Heart left ventricle (tissue), 16 donors: ENCODE measurements at regions of chr22 and their contacts with region 1.

Region 1: GRCh38 chr22:24005201-24005600 is at the start of gene GSTT4:
- DNase-seq: peak; percentile 72 to 96 (median 87)
- ATAC-seq: peak; percentile 92 to 98 (median 96)
- H3K4me3 ChIP-seq: no peak within 1 kb of the TSS
- H3K27ac ChIP-seq: peak within 1 kb of the TSS in 10 of 12 donors; percentile 13 to 74 (median 57)
- H3K4me1 ChIP-seq: peaks cover 0 to 17% (median 7%) of the 10 kb centered on the region in 12 donors
- H3K27me3 ChIP-seq: no peaks in the 10 kb centered on the region
- CTCF ChIP-seq: no peak
- POLR2A ChIP-seq: no peak
- total RNA-seq, gene GSTT4: not detected

Region 2: DNA sequence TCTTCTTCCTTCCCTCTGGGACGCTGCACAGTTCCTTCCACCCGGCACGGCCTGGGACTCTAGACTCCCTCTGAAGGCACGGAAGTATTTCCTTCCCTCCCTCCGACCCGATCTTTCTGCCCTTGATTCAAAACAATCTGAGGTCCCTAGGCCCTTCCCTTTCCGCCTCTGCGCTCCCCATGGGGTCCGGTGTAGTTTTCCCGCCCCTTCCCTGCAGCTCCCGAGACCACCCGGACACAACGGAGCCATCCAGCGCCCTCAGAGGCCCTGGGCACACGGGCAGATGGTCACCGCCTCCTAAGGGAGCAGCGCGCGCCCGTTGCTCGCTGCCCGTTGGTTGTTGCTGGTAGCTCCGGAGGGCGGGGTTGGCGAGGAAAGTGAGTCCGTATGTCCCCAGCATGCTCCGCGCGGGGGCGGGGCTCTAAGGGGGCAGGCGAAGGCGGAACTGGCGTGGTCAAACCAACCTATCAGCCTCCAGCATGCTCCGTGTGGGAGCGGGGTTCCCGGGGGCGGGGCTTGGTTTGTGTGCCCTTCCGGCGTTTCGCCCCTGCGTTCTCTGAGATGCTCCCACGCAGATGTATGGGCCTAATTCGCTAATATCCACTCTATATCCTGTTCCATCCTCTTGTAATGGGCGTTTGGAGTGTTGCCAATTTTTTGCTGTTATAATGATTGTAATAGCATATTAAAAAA is 91.4 kb before region 1 on chr22:
- intact Hi-C with region 1: no loop called
- DNase-seq: peak; percentile 99 to 100 (median 100)
- ATAC-seq: peak; percentile 98 to 100 (median 100)
- H3K4me3 ChIP-seq: peak overlapping the region; percentile 24 to 73 (median 64)
- H3K27ac ChIP-seq: peak overlapping the region; percentile 42 to 94 (median 87)
- H3K4me1 ChIP-seq: peaks cover 0 to 21% (median 18%) of the 10 kb centered on the region in 12 donors
- H3K27me3 ChIP-seq: no peaks in the 10 kb centered on the region
- CTCF ChIP-seq: no peak
- POLR2A ChIP-seq: peak in 1 of 2 donors; percentile 91

Region 3: DNA sequence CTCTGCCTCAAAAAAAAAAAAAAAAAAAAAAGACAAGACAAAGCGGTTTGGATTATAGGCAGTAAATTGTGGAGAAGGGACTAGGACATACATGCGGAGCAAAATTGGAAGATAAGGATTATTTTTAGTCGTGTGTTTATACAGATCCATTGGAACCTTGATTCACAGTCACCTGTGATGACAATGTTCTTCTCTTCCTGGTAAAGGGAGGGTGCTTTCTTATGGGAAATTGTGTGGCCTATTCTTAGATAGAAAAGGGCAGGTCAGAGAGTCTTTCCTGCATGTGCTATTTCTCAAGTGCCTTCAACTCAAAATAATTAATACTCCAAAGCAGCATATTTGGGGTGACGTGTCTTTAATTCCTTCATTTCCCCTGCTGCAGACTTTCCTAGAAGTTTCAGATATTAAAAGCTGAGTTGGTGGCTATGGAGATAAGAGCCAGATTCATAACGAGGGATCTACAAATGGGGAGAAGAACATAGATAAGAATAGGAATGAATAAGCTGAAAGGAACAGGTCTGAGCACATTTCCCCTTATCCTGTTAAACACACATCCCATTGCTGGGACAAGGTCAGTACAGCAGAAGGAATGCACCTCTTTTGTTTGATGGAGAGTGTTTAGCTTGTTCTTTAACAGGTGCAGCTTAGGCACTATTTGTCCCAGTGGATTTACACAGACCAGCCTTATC is 66.7 kb before region 1 on chr22:
- intact Hi-C with region 1: loop called in 5 of 10 experiments (anchors 2 to 10 kb)
- DNase-seq: no peak
- ATAC-seq: peak in 1 of 4 donors; percentile 75
- H3K4me3 ChIP-seq: no peak overlapping the region
- H3K27ac ChIP-seq: peak overlapping the region in 1 of 12 donors; percentile 26
- H3K4me1 ChIP-seq: peaks cover 0 to 6% (median 0%) of the 10 kb centered on the region in 12 donors
- H3K27me3 ChIP-seq: no peaks in the 10 kb centered on the region
- CTCF ChIP-seq: no peak
- POLR2A ChIP-seq: no peak

Region 4: DNA sequence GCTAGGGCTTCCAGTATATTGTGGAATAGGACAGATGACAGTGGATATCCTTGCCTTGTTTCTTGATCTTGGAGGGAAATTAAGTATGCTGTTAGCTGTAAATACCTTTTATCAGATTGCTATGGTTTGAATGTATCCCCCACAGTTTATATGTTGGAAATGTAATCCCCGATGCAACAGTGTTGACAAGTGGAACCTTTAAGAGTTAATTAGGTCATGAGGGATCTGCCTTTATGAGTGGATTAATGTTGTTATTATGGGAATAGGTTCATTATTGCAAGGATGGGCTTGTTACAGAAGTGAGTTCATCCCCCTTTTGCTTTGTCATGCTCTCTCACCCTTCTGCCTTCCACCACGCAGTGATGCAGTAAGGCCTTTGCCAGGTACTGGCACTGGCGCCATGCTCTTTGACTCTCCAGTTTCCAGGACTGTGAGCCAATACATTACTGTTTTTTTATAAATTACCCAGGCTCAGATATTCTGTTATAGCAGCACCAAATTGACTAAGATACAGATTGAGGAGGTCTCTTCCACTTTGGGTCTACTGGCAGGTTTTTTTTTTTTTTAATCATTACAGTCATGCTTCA is 22.3 kb after region 1 on chr22:
- intact Hi-C with region 1: no loop called
- DNase-seq: peak in 1 of 5 donors; percentile 41
- ATAC-seq: peak; percentile 41 to 71 (median 60)
- H3K4me3 ChIP-seq: no peak overlapping the region
- H3K27ac ChIP-seq: no peak overlapping the region
- H3K4me1 ChIP-seq: peaks cover 0 to 18% (median 0%) of the 10 kb centered on the region in 12 donors
- H3K27me3 ChIP-seq: no peaks in the 10 kb centered on the region
- CTCF ChIP-seq: no peak
- POLR2A ChIP-seq: no peak

Region 5: DNA sequence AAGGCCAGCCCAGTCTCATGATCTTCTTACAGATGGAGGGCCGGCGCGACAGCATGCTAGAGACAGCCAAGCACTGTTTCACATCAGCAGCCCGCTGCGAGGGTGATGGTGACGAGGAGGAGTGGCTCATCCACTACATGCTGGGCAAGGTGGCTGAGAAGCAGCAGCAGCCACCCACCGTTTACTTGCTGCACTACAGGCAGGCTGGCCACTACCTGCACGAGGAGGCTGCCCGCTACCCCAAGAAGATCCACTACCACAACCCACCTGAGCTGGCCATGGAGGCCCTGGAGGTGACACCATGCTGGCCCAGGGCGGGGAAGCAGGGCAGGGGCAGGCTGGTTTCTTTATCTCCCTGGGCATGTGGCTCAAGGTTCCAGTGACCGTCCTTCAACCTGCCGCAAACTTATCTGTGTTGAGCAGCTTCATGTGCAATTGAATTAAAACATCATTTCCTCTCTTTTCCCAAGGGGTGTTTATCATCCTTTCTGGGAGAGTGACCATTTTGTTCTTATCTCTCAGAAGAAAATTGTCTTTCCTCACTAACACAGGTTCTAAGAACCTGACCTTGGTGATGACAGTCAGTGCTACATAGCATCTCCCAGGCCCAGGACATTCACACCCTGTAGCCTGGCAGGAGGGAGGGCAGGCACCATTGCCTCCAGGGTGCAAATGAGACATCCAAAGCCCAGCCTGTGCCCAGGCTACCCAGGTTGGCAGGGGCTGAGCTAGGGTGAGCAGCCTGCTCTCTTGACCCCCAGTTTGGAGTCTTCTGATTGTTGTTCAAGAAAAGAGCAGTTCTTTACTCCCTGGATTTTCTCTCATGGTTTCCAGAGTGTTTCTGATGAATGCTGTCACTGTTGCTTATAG is 86.6 kb after region 1 on chr22:
- intact Hi-C with region 1: loop called in 2 of 10 experiments (anchors 10 kb)
- DNase-seq: peak; percentile 52 to 90 (median 75)
- ATAC-seq: peak; percentile 83 to 94 (median 89)
- H3K4me3 ChIP-seq: no peak overlapping the region
- H3K27ac ChIP-seq: peak overlapping the region in 10 of 12 donors; percentile 5 to 82 (median 44)
- H3K4me1 ChIP-seq: peaks cover 0 to 32% (median 13%) of the 10 kb centered on the region in 12 donors
- H3K27me3 ChIP-seq: no peaks in the 10 kb centered on the region
- CTCF ChIP-seq: peak in 5 of 12 donors; percentile 13 to 32 (median 28)
- POLR2A ChIP-seq: no peak

Region 6: GRCh38 chr22:24144056-24144777 is 139.0 kb after region 1 on chr22:
- intact Hi-C with region 1: no loop called
- DNase-seq: no peak
- ATAC-seq: no peak
- H3K4me3 ChIP-seq: no peak overlapping the region
- H3K27ac ChIP-seq: peak overlapping the region in 11 of 12 donors; percentile 80 to 94 (median 88)
- H3K4me1 ChIP-seq: peaks cover 26 to 96% (median 74%) of the 10 kb centered on the region in 12 donors
- H3K27me3 ChIP-seq: no peaks in the 10 kb centered on the region
- CTCF ChIP-seq: no peak
- POLR2A ChIP-seq: no peak

Region 7: DNA sequence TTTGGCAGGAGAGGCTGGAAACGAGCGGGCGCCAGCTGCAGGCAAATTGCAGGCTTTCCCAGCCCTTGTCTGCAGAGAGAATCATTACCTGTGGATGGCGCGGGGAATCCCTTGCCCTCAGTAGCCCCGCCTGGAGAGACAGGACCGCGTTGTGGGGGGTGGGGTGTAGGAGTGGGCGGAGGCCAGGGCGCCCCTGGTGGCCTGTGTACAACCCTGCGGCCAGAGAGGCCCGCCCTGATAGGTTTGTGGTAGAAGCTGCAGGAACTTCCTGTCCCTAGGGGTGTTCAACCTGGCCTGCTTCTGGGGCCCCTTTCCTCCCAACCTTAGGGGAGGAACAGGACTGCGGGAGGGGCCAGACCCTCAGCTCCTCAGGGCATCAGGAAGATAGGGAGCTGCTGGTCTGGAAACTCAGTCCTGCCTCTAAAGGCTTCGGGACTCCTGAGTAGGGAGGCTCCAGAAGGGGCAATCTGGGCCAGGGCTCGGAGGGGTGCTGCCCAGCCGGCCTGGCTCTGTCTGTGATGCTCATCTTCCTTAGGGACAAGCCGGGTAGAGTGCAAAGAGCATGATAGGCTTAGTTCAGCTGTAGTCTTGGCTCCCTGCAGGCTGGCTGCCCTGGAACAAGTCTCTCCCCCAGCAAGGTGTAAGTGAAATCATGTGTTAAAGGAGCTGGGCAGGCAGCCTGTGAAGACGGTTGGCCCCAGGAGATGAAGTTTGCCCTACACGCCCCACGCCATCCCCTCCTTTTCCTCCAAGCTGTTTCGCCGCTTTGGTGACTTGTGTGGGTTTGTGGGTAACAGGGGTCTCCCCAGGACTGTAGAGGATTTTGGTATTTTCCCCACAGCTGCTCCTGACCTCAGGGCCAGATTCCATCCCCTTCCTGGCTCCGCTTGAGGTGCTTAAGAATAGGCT is 152.0 kb after region 1 on chr22:
- intact Hi-C with region 1: loop called in 4 of 10 experiments (anchors 10 kb)
- DNase-seq: peak; percentile 82 to 91 (median 87)
- ATAC-seq: peak; percentile 79 to 88 (median 82)
- H3K4me3 ChIP-seq: peak overlapping the region; percentile 54 to 93 (median 76)
- H3K27ac ChIP-seq: peak overlapping the region in 11 of 12 donors; percentile 76 to 94 (median 86)
- H3K4me1 ChIP-seq: peaks cover 3 to 76% (median 55%) of the 10 kb centered on the region in 12 donors
- H3K27me3 ChIP-seq: no peaks in the 10 kb centered on the region
- CTCF ChIP-seq: peak; percentile 71 to 89 (median 81)
- POLR2A ChIP-seq: no peak

Region 8: GRCh38 chr22:24175160-24175808 is 170.1 kb after region 1 on chr22:
- intact Hi-C with region 1: loop called in 3 of 10 experiments (anchors 5 to 10 kb)
- DNase-seq: peak; percentile 84 to 92 (median 90)
- ATAC-seq: peak; percentile 27 to 76 (median 66)
- H3K4me3 ChIP-seq: no peak overlapping the region
- H3K27ac ChIP-seq: peak overlapping the region; percentile 23 to 85 (median 70)
- H3K4me1 ChIP-seq: peaks cover 0 to 52% (median 25%) of the 10 kb centered on the region in 12 donors
- H3K27me3 ChIP-seq: no peaks in the 10 kb centered on the region
- CTCF ChIP-seq: peak; percentile 80 to 94 (median 88)
- POLR2A ChIP-seq: no peak